ENCODE measurements at regions of chr14 and their contacts with region 1.

Region 1: GRCh38 chr14:49908432-49908781 is 15.5 kb downstream of the ARF6 start:
- DNase-seq: no peak
- ATAC-seq: no peak
- H3K4me3 Mint-ChIP-seq: no peak overlapping the region
- H3K27ac Mint-ChIP-seq: peak overlapping the region; percentile 24
- H3K4me1 Mint-ChIP-seq: peaks cover 37% of the 10 kb centered on the region
- H3K27me3 Mint-ChIP-seq: no peaks in the 10 kb centered on the region
- CTCF ChIP-seq: no peak

Region 2: DNA sequence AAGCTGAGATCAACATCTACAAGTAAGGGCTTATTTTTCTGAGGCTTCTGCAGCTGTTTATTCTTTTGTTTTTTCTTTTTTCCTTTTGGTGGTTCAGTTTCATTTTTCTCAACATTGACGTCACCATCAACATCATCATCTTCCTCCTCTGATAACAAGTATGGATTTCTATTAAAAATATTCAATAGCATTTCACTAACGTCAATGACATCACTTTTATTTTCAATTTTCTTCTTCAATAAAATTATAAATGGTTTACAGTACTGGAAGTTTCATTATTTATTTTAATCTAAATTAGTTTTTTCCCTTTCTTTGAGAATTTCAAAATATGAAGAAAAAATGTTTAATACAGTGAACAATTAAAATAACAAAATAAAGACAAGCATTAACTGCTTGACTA is 79.8 kb before region 1 on chr14:
- CTCF ChIA-PET with region 1: no interaction called
- POLR2A ChIA-PET with region 1: no interaction called
- intact Hi-C with region 1: no loop called
- DNase-seq: no peak
- ATAC-seq: no peak
- H3K4me3 Mint-ChIP-seq: no peak overlapping the region
- H3K27ac Mint-ChIP-seq: no peak overlapping the region
- H3K4me1 Mint-ChIP-seq: peaks cover 6% of the 10 kb centered on the region
- H3K27me3 Mint-ChIP-seq: no peaks in the 10 kb centered on the region
- CTCF ChIP-seq: no peak

Region 3: DNA sequence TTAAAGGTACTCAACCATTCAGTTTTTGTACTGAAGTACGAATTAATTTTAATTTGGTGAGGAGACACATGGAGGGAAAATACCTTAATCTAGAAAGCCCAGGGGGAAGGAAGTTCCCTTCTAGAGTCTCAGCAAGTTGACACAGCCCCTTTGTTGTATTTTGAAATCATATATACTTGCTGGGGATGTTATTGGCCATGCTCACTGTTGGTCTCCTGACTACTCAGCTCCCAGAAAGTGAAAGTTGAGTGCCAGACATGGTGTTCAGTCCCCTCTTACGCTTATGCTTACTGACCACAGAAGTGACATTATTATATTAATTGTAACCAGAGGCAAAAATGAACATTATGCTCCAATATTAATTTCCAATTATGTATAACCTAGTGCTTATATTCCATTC is 12.5 kb after region 1 on chr14:
- CTCF ChIA-PET with region 1: no interaction called
- POLR2A ChIA-PET with region 1: interaction called, 4 read pairs
- intact Hi-C with region 1: loop called (anchors 1 kb)
- DNase-seq: no peak
- ATAC-seq: peak; percentile 77
- H3K4me3 Mint-ChIP-seq: peak overlapping the region; percentile 58
- H3K27ac Mint-ChIP-seq: peak overlapping the region; percentile 76
- H3K4me1 Mint-ChIP-seq: peaks cover 43% of the 10 kb centered on the region
- H3K27me3 Mint-ChIP-seq: no peaks in the 10 kb centered on the region
- CTCF ChIP-seq: no peak

Region 4: DNA sequence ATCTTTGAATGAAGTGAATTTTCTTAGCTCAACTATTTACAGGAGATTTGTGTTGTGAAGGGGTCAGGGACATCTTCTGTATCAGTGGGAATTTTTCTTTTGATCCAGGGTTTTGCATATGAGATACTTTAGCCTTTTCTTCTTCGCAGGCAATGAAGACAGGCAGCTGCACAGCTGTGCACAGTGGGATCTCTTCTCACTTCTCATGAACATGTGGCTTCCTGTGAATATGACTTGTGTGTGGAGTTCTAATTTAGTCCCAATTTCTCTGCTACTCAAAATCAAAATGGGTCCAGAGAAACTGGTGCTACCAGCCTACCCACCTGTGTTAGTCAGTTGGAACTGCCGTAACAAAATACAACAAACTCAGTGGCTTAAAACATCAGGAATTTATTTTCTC is 22.3 kb after region 1 on chr14:
- CTCF ChIA-PET with region 1: no interaction called
- POLR2A ChIA-PET with region 1: interaction called, 23 read pairs
- intact Hi-C with region 1: no loop called
- DNase-seq: no peak
- ATAC-seq: no peak
- H3K4me3 Mint-ChIP-seq: peak overlapping the region; percentile 40
- H3K27ac Mint-ChIP-seq: peak overlapping the region; percentile 88
- H3K4me1 Mint-ChIP-seq: peaks cover 34% of the 10 kb centered on the region
- H3K27me3 Mint-ChIP-seq: no peaks in the 10 kb centered on the region
- CTCF ChIP-seq: no peak

Measured in activated B cell treated with CpG ODN at 0.5 μM for 24 hours (primary cell).